Heart left ventricle (tissue), 16 donors: ENCODE measurements at regions of chr12 and their contacts with region 1.

Region 1: DNA sequence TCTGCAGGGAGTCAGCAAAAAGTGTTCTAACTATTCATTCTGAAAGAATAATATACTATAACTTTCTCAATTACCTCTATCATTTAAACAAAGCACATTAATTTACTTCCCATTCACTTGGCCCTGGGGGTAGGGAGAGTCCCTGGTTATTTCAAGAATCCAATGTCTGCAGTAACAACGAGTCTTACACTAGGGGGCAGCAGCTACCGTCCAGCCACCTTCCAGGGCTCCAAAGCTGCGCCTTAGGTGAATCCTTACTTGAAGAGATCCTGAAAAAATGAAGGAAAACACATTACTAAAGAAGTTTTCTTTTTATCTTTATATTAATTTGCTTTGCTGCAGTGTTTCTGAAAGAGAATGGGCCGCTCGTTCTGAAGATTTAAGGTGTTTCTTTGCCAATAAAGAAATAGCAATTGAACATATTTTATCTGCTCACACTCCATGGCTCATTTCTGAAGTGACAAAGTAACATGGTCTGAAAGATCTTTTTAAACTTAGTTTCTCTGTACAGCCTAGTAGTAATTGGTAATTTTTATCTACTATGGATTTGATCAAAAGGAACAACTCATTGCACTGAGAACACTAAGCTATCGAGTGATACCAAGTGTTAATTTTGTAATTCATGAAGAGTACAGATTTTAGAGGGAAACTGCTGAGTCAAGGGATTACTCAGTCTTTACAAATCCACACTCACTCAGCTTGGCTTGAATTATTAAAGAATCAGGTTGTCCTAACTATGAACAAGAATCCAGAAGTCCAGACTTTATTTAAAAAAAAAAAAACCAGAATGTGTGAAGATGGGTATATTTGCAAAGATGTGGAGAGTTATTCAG is 27.6 kb downstream of the BHLHE41 start:
- DNase-seq: peak; percentile 64 to 74 (median 73)
- ATAC-seq: peak; percentile 77 to 98 (median 94)
- H3K4me3 ChIP-seq: no peak overlapping the region
- H3K27ac ChIP-seq: no peak overlapping the region
- H3K4me1 ChIP-seq: peaks cover 0 to 5% (median 0%) of the 10 kb centered on the region in 12 donors
- H3K27me3 ChIP-seq: no peaks in the 10 kb centered on the region
- CTCF ChIP-seq: peak; percentile 92 to 98 (median 96)
- POLR2A ChIP-seq: no peak

Region 2: GRCh38 chr12:25436203-25437030 is 660.8 kb before region 1 on chr12:
- intact Hi-C with region 1: loop called in 2 of 10 experiments (anchors 5 to 10 kb)
- DNase-seq: peak in 1 of 5 donors; percentile 29
- ATAC-seq: peak in 3 of 4 donors; percentile 63 to 78 (median 70)
- H3K4me3 ChIP-seq: peak overlapping the region in 9 of 12 donors; percentile 30 to 48 (median 35)
- H3K27ac ChIP-seq: no peak overlapping the region
- H3K4me1 ChIP-seq: peaks cover 0 to 12% (median 0%) of the 10 kb centered on the region in 12 donors
- H3K27me3 ChIP-seq: no peaks in the 10 kb centered on the region
- CTCF ChIP-seq: peak; percentile 74 to 88 (median 79)
- POLR2A ChIP-seq: no peak

Region 3: DNA sequence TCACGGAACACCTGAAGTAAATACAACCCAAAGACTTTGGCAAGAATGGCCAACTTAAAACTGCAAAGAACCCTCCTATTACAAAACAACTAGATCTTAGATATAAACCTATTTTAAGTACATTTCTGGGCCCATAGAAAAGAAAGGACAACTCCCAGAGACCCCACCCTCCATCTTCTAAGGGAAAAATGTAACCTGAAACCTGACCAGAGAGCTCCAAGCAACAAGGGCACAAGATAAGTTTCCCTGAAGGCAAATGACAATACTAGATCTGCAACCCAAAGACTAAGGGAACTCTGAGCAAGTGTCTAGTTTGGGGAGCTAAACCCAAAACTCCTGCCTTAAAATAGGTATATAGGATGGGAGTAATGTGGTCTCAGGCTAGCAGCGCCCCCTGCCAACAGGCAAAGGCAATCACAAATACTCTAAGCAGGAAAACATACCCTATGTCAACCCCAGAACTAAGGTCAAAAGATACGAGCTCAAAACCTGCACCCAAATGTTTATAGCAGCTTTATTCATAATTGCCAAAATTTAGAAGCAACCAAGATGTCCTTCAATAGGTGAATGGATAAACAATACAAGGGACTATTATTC is 516.9 kb after region 1 on chr12:
- intact Hi-C with region 1: loop called in 1 of 10 experiments (anchors 10 kb)
- DNase-seq: peak in 1 of 5 donors; percentile 25
- ATAC-seq: peak in 3 of 4 donors; percentile 44 to 59 (median 51)
- H3K4me3 ChIP-seq: no peak overlapping the region
- H3K27ac ChIP-seq: no peak overlapping the region
- H3K4me1 ChIP-seq: peaks cover 0 to 4% (median 0%) of the 10 kb centered on the region in 12 donors
- H3K27me3 ChIP-seq: no peaks in the 10 kb centered on the region
- CTCF ChIP-seq: peak; percentile 21 to 69 (median 50)
- POLR2A ChIP-seq: no peak

Region 4: DNA sequence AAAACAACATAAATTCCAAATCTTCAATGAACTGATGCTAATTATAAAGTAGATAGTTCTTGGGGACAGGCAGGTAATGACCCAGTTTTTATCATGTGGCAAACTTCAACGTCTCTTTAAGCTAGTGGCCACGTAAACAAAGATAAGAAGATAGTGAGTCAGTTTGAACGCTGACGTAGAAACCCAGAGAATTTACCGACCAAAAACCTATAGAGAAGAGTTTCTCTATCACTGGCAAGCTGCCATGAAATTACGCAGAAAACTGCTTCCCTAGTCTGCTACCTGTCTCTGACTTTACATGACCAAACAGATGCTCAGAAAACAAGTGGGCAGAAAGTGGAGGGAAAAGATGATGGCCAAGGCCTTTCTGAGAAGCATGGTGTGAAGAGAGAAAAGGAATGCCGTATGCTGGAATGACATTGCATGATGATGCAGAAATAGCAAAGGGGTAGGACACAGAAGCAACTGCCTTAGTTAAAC is 599.4 kb after region 1 on chr12:
- intact Hi-C with region 1: loop called in 4 of 10 experiments (anchors 5 kb)
- DNase-seq: no peak
- ATAC-seq: no peak
- H3K4me3 ChIP-seq: no peak overlapping the region
- H3K27ac ChIP-seq: no peak overlapping the region
- H3K4me1 ChIP-seq: no peaks in the 10 kb centered on the region
- H3K27me3 ChIP-seq: no peaks in the 10 kb centered on the region
- CTCF ChIP-seq: no peak
- POLR2A ChIP-seq: no peak

Region 5: DNA sequence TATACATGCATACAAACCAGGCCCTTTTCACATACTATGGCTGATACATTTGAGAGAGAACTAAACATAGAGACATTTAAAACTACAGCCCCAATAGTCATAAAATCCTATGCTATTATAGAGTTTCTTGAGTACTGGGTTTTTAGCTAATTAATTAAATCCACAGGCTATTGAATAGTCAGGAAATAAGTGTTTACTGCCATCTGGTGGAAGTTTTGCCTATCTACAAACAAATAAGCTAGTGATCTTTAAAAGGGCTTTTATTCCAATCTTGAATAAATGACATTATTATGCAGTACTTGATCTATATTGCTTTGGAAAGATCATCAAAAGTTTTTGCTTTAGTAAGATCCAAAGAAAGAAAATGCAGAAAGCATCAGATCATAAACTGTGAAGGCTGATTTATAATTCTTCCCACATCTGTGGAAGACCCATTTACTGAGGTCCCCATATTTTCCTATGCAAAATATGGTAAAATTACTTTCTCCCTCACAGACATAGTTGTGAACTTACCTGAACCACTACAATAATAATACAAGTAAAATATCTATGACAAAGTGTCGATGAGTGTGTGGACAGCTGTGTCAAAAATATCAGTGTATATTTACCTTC is 604.4 kb after region 1 on chr12:
- intact Hi-C with region 1: loop called in 4 of 10 experiments (anchors 5 kb)
- DNase-seq: no peak
- ATAC-seq: no peak
- H3K4me3 ChIP-seq: no peak overlapping the region
- H3K27ac ChIP-seq: no peak overlapping the region
- H3K4me1 ChIP-seq: peaks cover 0 to 31% (median 12%) of the 10 kb centered on the region in 12 donors
- H3K27me3 ChIP-seq: no peaks in the 10 kb centered on the region
- CTCF ChIP-seq: peak; percentile 50 to 74 (median 64)
- POLR2A ChIP-seq: no peak